IMR-90 (cell line): ENCODE measurements at regions of chr2 and their contacts with region 1.

Region 1: GRCh38 chr2:3827673-3828575 is 124.5 kb downstream of the DCDC2C start:
- DNase-seq: peak; percentile 36
- ATAC-seq: peak; percentile 82
- H3K4me3 ChIP-seq: no peak overlapping the region
- H3K27ac ChIP-seq: no peak overlapping the region
- H3K4me1 ChIP-seq: no peaks in the 10 kb centered on the region
- H3K27me3 ChIP-seq: peaks cover 6% of the 10 kb centered on the region
- CTCF ChIP-seq: peak; percentile 71
- POLR2A ChIP-seq: no peak
- RAD21 ChIP-seq: peak; percentile 64

Region 2: DNA sequence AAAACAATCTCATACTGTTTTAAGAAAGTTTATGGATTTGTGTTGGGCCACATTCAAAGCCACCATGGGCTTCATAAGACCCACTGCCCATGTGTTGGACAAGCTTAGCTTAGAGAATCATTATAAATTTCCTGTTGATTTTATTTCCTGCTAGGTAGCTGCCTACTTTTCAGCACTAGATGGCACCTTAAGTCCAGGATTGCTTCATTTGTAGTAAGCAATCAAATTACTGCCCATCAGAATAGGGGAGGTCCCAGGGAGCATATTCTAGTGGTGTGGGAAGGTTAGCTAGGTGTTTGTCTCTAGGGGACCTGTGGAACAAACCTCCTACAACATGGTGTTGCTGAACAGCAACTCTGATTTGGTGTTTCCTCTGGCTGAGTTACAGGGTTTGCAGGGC is 135.5 kb before region 1 on chr2:
- CTCF ChIA-PET with region 1: interaction called, 4 read pairs
- POLR2A ChIA-PET with region 1: no interaction called
- dilution Hi-C with region 1: no loop called
- in situ Hi-C with region 1: no loop called
- intact Hi-C with region 1: loop called (anchors 1 kb)
- DNase-seq: peak; percentile 31
- ATAC-seq: peak; percentile 85
- H3K4me3 ChIP-seq: no peak overlapping the region
- H3K27ac ChIP-seq: no peak overlapping the region
- H3K4me1 ChIP-seq: no peaks in the 10 kb centered on the region
- H3K27me3 ChIP-seq: peaks cover 11% of the 10 kb centered on the region
- CTCF ChIP-seq: peak; percentile 58
- POLR2A ChIP-seq: no peak
- RAD21 ChIP-seq: peak; percentile 62

Region 3: GRCh38 chr2:3738454-3738853 is 89.5 kb before region 1 on chr2:
- CTCF ChIA-PET with region 1: interaction called, 4 read pairs
- POLR2A ChIA-PET with region 1: no interaction called
- dilution Hi-C with region 1: no loop called
- in situ Hi-C with region 1: loop called (anchors 5 kb)
- intact Hi-C with region 1: loop called (anchors 1 kb)
- DNase-seq: peak; percentile 54
- ATAC-seq: peak; percentile 96
- H3K4me3 ChIP-seq: no peak overlapping the region
- H3K27ac ChIP-seq: no peak overlapping the region
- H3K4me1 ChIP-seq: no peaks in the 10 kb centered on the region
- H3K27me3 ChIP-seq: peaks cover 14% of the 10 kb centered on the region
- CTCF ChIP-seq: peak; percentile 61
- POLR2A ChIP-seq: no peak
- RAD21 ChIP-seq: peak; percentile 74